PC-9 (cell line): ENCODE measurements at regions of chr4 and their contacts with region 1.

Region 1: GRCh38 chr4:52028969-52029368 is 8.8 kb upstream of the LRRC66 start:
- DNase-seq: no peak
- H3K4me3 ChIP-seq: no peak overlapping the region
- H3K27ac ChIP-seq: no peak overlapping the region
- H3K4me1 ChIP-seq: no peaks in the 10 kb centered on the region
- H3K27me3 ChIP-seq: no peaks in the 10 kb centered on the region
- CTCF ChIP-seq: no peak

Region 2: DNA sequence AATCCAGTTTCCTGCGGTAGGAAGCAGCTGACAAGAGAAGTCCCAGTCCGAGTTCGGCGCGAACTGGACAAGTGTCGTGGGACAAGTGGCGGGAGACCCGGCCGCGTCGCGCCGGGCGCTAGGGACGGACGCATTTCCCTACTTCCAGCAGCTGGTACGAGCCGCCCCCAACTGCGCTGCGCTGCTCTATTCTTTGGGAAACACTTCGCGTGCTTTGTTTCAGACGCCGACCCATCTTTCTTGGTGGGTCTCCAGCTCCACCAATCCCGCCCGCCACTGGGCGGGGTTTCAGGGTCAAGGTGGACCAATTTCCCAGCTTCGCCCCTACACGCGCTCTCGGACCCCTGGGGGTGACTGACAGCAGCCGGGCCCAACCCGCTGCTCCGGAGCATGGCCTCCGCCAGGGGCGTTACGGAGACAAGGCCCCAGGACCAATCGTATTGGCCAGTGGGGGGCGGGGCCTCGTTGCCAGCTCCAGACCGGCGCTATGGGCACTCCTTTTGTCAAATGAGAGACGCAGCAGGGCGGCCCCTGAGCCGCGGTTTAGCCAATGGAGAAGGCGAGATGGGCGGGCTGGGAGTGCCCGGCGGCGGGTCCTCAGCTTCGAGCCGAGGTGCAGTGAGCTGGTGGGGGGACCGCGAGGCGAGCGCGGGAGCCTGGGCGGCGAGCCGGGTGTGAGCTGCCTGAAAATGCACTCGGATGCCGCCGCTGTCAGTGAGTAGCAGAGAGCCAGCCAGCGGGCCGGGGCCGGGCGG is 186.2 kb before region 1 on chr4 and contains the start of gene DCUN1D4:
- CTCF ChIA-PET with region 1: no interaction called
- POLR2A ChIA-PET with region 1: no interaction called
- intact Hi-C with region 1: loop called (anchors 5 kb)
- DNase-seq: peak; percentile 93 to 97
- H3K4me3 ChIP-seq: peak within 1 kb of the TSS; percentile 73
- H3K27ac ChIP-seq: peak within 1 kb of the TSS; percentile 51; the same call in 1 of the 2 replicates
- H3K4me1 ChIP-seq: peaks cover 9% of the 10 kb centered on the region
- H3K27me3 ChIP-seq: no peaks in the 10 kb centered on the region
- CTCF ChIP-seq: no peak; the same call in 1 of the 2 replicates
- total RNA-seq, gene DCUN1D4: 24.9 and 25.3 TPM in 2 replicates

Region 3: DNA sequence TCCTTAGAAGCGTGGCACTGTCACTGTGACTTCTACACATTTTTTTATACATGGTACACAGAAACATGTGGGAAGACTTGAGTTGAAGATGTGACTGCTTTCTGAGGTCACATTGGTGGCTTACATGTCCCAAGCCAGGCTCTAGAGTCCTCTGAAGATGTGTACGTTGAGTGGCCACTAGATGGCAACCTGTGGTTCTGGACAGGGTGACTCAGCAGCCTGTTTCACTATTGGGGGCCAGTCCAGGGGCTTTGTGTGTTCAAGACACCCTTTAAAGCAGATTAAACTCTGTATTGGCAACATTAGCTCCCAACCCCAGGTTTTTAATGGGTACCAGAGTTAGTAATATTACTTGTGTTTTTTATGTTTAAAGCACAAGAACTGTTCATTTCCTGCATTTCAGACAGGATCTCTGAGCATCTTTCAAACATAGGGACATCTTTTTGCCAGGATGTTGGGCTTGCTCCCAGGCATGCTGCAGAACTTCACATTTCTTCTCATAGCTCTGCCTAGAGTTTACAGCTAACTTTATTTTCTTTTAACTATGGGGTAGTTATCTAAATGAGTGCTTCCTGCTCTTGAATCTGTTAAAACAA is 133.1 kb before region 1 on chr4:
- CTCF ChIA-PET with region 1: no interaction called
- POLR2A ChIA-PET with region 1: no interaction called
- intact Hi-C with region 1: loop called (anchors 2 kb)
- DNase-seq: peak in 1 of 2 experiments; percentile 33
- H3K4me3 ChIP-seq: no peak overlapping the region
- H3K27ac ChIP-seq: 0 out of 2 replicates have a peak overlapping the region, but pooled peaks have one; percentile 41
- H3K4me1 ChIP-seq: no peaks in the 10 kb centered on the region
- H3K27me3 ChIP-seq: no peaks in the 10 kb centered on the region
- CTCF ChIP-seq: peak; percentile 80